Activated CD4-positive, alpha-beta memory T cell treated with anti-CD3 and anti-CD28 coated beads, Interleukin-2, amount 10 ng/mL, durations not matched to agents 7 days and 5 days (primary cell): ENCODE measurements at regions of chr12 and their contacts with region 1.

Region 1: GRCh38 chr12:62192180-62192902 is 67.9 kb upstream of the USP15 start:
- DNase-seq: peak; percentile 46
- H3K4me3 Mint-ChIP-seq: peak overlapping the region; percentile 60
- H3K27ac Mint-ChIP-seq: no peak overlapping the region
- H3K4me1 Mint-ChIP-seq: peaks cover 24% of the 10 kb centered on the region
- H3K27me3 Mint-ChIP-seq: peaks cover 64% of the 10 kb centered on the region

Region 2: GRCh38 chr12:62106547-62107185 is 85.7 kb before region 1 on chr12:
- CTCF ChIA-PET with region 1: no interaction called
- POLR2A ChIA-PET with region 1: no interaction called
- DNase-seq: no peak
- H3K4me3 Mint-ChIP-seq: no peak overlapping the region
- H3K27ac Mint-ChIP-seq: no peak overlapping the region
- H3K4me1 Mint-ChIP-seq: no peaks in the 10 kb centered on the region
- H3K27me3 Mint-ChIP-seq: peaks cover 5% of the 10 kb centered on the region

Region 3: DNA sequence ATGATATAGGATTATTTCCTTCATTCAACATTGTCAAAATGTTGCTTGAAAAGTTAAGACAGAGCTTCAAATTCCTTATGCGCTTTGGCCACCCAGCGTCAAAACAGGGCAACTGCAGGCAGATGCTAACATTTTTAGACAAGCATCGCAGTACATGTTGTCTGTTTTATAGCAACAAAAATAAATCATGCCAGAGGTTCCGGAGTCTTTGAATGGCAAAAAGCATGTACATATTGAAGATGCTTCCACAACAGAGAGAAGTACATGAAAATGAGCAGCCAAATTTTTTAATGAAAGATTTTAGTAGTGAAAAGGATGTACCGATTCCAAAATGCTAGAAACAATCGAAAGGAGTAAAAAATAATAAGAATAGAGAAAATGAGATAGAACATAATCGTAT is 18.1 kb after region 1 on chr12:
- CTCF ChIA-PET with region 1: interaction called, 11 read pairs
- POLR2A ChIA-PET with region 1: no interaction called
- DNase-seq: peak; percentile 43
- H3K4me3 Mint-ChIP-seq: no peak overlapping the region
- H3K27ac Mint-ChIP-seq: no peak overlapping the region
- H3K4me1 Mint-ChIP-seq: peaks cover 9% of the 10 kb centered on the region
- H3K27me3 Mint-ChIP-seq: peaks cover 12% of the 10 kb centered on the region

Region 4: GRCh38 chr12:62301080-62301798 is 108.9 kb after region 1 on chr12:
- CTCF ChIA-PET with region 1: no interaction called
- POLR2A ChIA-PET with region 1: no interaction called
- DNase-seq: no peak
- H3K4me3 Mint-ChIP-seq: no peak overlapping the region
- H3K27ac Mint-ChIP-seq: no peak overlapping the region
- H3K4me1 Mint-ChIP-seq: peaks cover 25% of the 10 kb centered on the region
- H3K27me3 Mint-ChIP-seq: no peaks in the 10 kb centered on the region